ENCODE measurements at regions of chr12 and their contacts with region 1.

Region 1: DNA sequence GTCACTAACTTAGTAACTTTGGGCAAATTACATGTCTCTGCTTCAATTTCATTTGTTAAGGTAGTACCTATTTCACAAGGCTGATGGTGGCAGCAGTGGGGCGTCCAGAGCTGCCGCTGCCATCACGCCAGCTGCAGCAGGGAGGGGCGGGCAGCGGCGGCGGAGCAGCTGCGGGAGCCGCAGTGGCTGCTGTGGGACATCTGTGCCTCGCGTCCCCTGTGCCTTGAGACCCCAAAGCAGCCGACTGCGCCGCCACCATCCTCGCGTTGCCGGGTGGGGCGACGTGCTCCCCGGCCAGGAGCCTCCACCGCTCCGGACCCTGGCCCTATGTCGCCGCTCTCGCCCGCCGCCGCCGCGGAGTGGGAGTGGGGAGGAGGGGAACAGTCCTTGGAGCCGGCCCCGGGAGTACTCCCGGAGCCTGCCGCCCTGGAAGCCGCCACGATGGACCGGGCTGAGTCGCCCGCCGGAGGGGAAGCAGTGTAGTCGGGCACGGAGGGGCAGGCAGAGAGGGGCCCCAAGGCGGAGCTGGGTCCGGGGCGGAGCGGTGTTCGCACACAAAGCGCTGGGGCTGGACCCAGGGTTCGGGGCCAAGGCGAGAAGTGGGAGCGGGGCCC is 51.4 kb downstream of the A2M start:
- DNase-seq: peak; percentile 62
- H3K4me3 ChIP-seq: peak overlapping the region; percentile 70 to 97 (median 88)
- H3K27ac ChIP-seq: peak overlapping the region; percentile 80
- H3K4me1 ChIP-seq: peaks cover 30% of the 10 kb centered on the region
- H3K27me3 ChIP-seq: no peaks in the 10 kb centered on the region
- CTCF ChIP-seq: peak; percentile 19 to 70

Region 2: GRCh38 chr12:9108504-9109212 is 44.4 kb after region 1 on chr12:
- CTCF ChIA-PET with region 1: interaction called, 13 read pairs
- dilution Hi-C with region 1: no loop called
- in situ Hi-C with region 1: no loop called
- intact Hi-C with region 1: no loop called
- DNase-seq: no peak
- H3K4me3 ChIP-seq: no peak overlapping the region
- H3K27ac ChIP-seq: no peak overlapping the region
- H3K4me1 ChIP-seq: no peaks in the 10 kb centered on the region
- H3K27me3 ChIP-seq: no peaks in the 10 kb centered on the region
- CTCF ChIP-seq: no peak

Region 3: DNA sequence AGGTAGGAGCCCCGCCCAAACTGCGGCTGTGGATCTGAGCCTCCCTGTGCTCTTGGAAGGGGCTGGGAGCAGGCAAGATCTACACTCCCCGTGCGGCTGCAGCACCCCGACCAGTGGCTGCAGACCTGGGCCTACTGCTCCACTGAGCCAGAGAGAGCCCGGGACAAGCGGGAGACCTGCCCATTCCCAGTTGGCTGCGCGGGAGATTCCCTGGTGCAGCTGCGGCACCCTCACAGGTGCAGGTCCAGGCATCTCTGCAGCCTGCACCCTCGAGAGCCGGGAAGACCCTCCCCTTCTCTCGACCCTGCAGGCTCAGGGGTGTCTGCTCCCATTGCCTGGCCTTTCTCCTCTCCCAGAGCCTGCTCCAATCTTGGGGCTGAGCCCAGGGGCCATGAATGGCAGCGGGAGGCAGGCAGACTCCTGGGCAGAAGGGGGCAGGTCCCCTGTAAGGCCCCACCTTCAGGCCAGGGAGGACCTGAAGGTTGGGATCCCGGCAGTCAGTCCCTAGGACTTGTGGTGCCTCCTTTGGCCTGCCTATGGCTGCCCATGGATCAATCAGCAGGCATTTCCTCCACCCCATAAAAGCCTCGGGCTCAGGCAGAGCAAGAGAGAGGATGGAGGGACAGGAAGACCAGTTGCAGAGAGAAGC is 60.2 kb after region 1 on chr12:
- CTCF ChIA-PET with region 1: no interaction called
- dilution Hi-C with region 1: no loop called
- in situ Hi-C with region 1: no loop called
- intact Hi-C with region 1: loop called (anchors 5 kb)
- DNase-seq: no peak
- H3K4me3 ChIP-seq: no peak overlapping the region
- H3K27ac ChIP-seq: no peak overlapping the region
- H3K4me1 ChIP-seq: peaks cover 10% of the 10 kb centered on the region
- H3K27me3 ChIP-seq: no peaks in the 10 kb centered on the region
- CTCF ChIP-seq: no peak

Region 4: GRCh38 chr12:9144730-9145106 is 80.4 kb after region 1 on chr12:
- CTCF ChIA-PET with region 1: interaction called, 12 read pairs
- dilution Hi-C with region 1: no loop called
- in situ Hi-C with region 1: no loop called
- intact Hi-C with region 1: no loop called
- DNase-seq: no peak
- H3K4me3 ChIP-seq: no peak overlapping the region
- H3K27ac ChIP-seq: no peak overlapping the region
- H3K4me1 ChIP-seq: no peaks in the 10 kb centered on the region
- H3K27me3 ChIP-seq: peaks cover 2% of the 10 kb centered on the region
- CTCF ChIP-seq: no peak

Region 5: DNA sequence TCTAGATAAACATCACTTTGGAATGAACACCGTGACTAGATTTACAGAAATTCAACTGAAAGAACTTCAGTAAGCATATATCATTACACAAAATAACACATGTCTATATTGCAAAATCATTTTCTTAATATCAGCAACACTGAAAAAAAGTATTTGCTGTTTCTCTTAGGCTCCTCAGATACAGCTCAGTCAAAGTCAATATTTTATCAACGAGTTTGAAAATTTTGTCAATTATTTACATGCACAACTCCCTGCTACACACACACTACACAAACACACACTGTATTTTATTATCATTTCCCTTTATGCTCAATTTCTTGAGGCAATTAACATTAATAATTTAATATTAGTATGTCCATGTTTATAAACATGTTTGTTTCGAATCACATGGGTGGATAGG is 140.1 kb after region 1 on chr12:
- CTCF ChIA-PET with region 1: no interaction called
- dilution Hi-C with region 1: no loop called
- in situ Hi-C with region 1: no loop called
- intact Hi-C with region 1: loop called (anchors 10 kb)
- DNase-seq: no peak
- H3K4me3 ChIP-seq: no peak overlapping the region
- H3K27ac ChIP-seq: no peak overlapping the region
- H3K4me1 ChIP-seq: no peaks in the 10 kb centered on the region
- H3K27me3 ChIP-seq: peaks cover 4% of the 10 kb centered on the region
- CTCF ChIP-seq: no peak

Region 6: GRCh38 chr12:9372202-9372601 is 307.9 kb after region 1 on chr12:
- CTCF ChIA-PET with region 1: no interaction called
- dilution Hi-C with region 1: no loop called
- in situ Hi-C with region 1: no loop called
- intact Hi-C with region 1: loop called (anchors 5 kb)
- DNase-seq: peak; percentile 34
- H3K4me3 ChIP-seq: no peak overlapping the region
- H3K27ac ChIP-seq: no peak overlapping the region
- H3K4me1 ChIP-seq: no peaks in the 10 kb centered on the region
- H3K27me3 ChIP-seq: no peaks in the 10 kb centered on the region
- CTCF ChIP-seq: peak; percentile 23 to 56

Measured in mammary epithelial cell (primary cell).